ENCODE measurements at regions of chrX and their contacts with region 1.

Region 1: DNA sequence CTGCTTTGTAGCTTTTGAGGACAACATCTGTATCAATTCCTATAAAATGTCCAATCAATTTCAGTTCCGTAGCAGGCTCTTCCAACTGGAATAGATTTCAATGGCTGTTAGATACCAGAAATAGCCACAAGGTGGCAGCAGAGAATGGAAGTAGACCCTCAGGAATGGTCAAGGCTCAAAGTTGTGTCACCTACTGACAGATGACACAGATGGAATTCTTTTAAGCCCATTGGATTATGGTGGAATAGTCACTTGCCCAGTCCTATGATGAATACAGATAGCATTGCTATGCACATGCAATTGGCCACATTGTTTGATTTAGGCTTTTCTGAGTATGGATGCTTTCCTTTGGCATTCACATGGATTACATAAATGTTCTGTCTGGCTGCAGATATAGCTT is 130.4 kb upstream of the RADX start:
- DNase-seq: peak; percentile 1
- H3K4me3 ChIP-seq: no peak overlapping the region
- H3K27ac ChIP-seq: no peak overlapping the region
- H3K27me3 ChIP-seq: no peaks in the 10 kb centered on the region
- CTCF ChIP-seq: peak; percentile 66

Region 2: GRCh38 chrX:106752086-106752678 is 270.8 kb after region 1 on chrX:
- CTCF ChIA-PET with region 1: interaction called, 22 read pairs
- POLR2A ChIA-PET with region 1: no interaction called
- DNase-seq: no peak
- H3K4me3 ChIP-seq: no peak overlapping the region
- H3K27ac ChIP-seq: no peak overlapping the region
- H3K27me3 ChIP-seq: no peaks in the 10 kb centered on the region
- CTCF ChIP-seq: peak; percentile 51

Region 3: GRCh38 chrX:106791495-106791894 is 310.2 kb after region 1 on chrX:
- CTCF ChIA-PET with region 1: interaction called, 11 read pairs
- POLR2A ChIA-PET with region 1: no interaction called
- DNase-seq: no peak
- H3K4me3 ChIP-seq: no peak overlapping the region
- H3K27ac ChIP-seq: no peak overlapping the region
- H3K27me3 ChIP-seq: no peaks in the 10 kb centered on the region
- CTCF ChIP-seq: peak; percentile 30

Region 4: GRCh38 chrX:107171369-107172102 is 690.2 kb after region 1 on chrX:
- CTCF ChIA-PET with region 1: no interaction called
- POLR2A ChIA-PET with region 1: no interaction called
- DNase-seq: no peak
- H3K4me3 ChIP-seq: no peak overlapping the region
- H3K27ac ChIP-seq: no peak overlapping the region
- H3K27me3 ChIP-seq: no peaks in the 10 kb centered on the region
- CTCF ChIP-seq: no peak